K562 (cell line): ENCODE measurements at regions of chr11 and their contacts with region 1.

Region 1: GRCh38 chr11:75204685-75205563 is 35.6 kb upstream of the TPBGL start:
- DNase-seq: peak; percentile 87 to 92 (median 90)
- ATAC-seq: peak; percentile 99
- H3K4me3 ChIP-seq: no peak overlapping the region
- H3K27ac ChIP-seq: no peak overlapping the region
- H3K4me1 ChIP-seq: peaks cover 6 to 10% of the 10 kb centered on the region in 2 experiments
- H3K27me3 ChIP-seq: no peaks in the 10 kb centered on the region; a peak in 1 of 5 replicates
- CTCF ChIP-seq: peak; percentile 94 to 96 (median 94)
- EP300 ChIP-seq: no peak
- POLR2A ChIP-seq: no peak
- RAD21 ChIP-seq: peak; percentile 92 to 94

Region 2: DNA sequence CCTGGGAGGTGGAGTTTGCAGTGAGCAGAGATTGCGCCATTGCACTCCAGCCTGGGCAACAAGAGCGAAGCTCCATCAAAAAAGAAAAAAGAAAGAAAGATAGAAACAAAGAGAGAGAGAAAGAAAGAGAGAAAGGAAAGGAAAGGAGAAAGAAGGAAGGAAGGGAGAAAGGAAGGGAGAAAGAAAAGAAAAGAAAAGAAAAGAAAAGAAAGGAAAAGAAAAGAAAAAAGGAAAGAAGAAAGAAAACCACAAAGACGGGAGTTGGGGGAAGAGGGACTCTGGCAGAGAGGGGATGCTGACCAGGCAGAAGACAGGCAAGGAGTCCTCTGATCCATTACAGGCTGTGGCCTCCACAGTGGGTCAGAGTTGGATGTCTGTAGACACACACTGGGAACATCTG is 72.8 kb before region 1 on chr11:
- CTCF ChIA-PET with region 1: no interaction called
- POLR2A ChIA-PET with region 1: no interaction called
- in situ Hi-C with region 1: no loop called
- intact Hi-C with region 1: no loop called
- DNase-seq: no peak
- ATAC-seq: no peak
- H3K4me3 ChIP-seq: no peak overlapping the region
- H3K27ac ChIP-seq: no peak overlapping the region
- H3K4me1 ChIP-seq: no peaks in the 10 kb centered on the region
- H3K27me3 ChIP-seq: no peaks in the 10 kb centered on the region
- CTCF ChIP-seq: no peak
- EP300 ChIP-seq: no peak
- POLR2A ChIP-seq: no peak
- RAD21 ChIP-seq: no peak

Region 3: GRCh38 chr11:75142714-75143419 is 62.1 kb before region 1 on chr11:
- CTCF ChIA-PET with region 1: interaction called, 29 read pairs
- POLR2A ChIA-PET with region 1: no interaction called
- in situ Hi-C with region 1: loop called (anchors 10 kb)
- intact Hi-C with region 1: loop called (anchors 1 kb)
- DNase-seq: peak; percentile 84 to 91 (median 88)
- ATAC-seq: peak; percentile 86
- H3K4me3 ChIP-seq: no peak overlapping the region
- H3K27ac ChIP-seq: peak overlapping the region; percentile 33; the same call in 1 of the 3 replicates
- H3K4me1 ChIP-seq: peaks cover 22 to 32% of the 10 kb centered on the region in 2 experiments
- H3K27me3 ChIP-seq: no peaks in the 10 kb centered on the region
- CTCF ChIP-seq: 0 out of 6 replicates have a peak, but pooled peaks of 1 of the 3 experiments have one; percentile 2
- EP300 ChIP-seq: 0 out of 2 replicates have a peak, but pooled peaks have one; percentile 23
- POLR2A ChIP-seq: no peak
- RAD21 ChIP-seq: no peak

Region 4: DNA sequence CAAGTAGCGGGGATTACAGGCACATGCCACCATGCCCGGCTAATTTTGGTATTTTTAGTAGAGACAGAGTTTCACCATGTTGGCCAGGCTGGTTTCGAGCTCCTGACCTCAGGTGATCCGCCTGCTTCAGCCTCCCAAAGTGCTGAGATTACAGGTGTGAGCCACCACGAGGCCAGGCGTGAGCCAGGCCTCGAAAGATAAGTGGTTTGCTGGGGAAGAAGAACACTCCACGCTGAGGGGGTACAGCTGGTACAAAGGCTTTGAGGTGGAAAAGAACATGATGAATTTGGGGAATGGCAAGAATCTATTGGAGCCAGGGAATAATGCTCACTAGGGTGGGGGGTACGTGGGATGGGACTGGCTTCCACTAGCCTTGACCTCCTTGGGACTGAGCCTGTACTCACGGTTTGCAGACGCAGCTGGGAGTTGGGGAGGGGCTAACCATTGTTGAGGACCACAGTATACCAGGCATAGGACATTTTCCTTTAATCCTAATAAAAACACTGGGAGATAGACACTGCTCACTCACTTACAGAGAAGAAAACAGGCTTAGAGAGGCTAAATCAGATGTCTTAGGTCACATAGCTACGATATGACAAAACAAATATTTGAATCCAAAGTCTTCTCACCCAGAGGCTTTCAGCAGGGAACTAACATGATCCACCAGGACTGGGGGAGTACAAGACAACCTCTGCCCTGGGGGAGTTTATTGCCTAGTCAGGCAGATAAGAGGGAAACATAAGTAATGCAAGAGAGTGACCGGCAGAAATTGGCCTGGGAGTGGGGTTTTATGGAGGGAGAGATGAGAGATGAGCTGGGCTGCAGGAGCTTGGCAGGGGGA is 49.1 kb before region 1 on chr11:
- CTCF ChIA-PET with region 1: no interaction called
- POLR2A ChIA-PET with region 1: no interaction called
- in situ Hi-C with region 1: no loop called
- intact Hi-C with region 1: no loop called
- DNase-seq: peak; percentile 28 to 54 (median 42)
- ATAC-seq: peak; percentile 76
- H3K4me3 ChIP-seq: no peak overlapping the region
- H3K27ac ChIP-seq: no peak overlapping the region
- H3K4me1 ChIP-seq: peaks cover 8% of the 10 kb centered on the region in 2 experiments
- H3K27me3 ChIP-seq: no peaks in the 10 kb centered on the region
- CTCF ChIP-seq: no peak
- EP300 ChIP-seq: no peak
- POLR2A ChIP-seq: no peak
- RAD21 ChIP-seq: no peak

Region 5: GRCh38 chr11:75301601-75302345 is 96.8 kb after region 1 on chr11:
- CTCF ChIA-PET with region 1: no interaction called
- POLR2A ChIA-PET with region 1: no interaction called
- in situ Hi-C with region 1: no loop called
- intact Hi-C with region 1: no loop called
- DNase-seq: no peak
- ATAC-seq: peak; percentile 32
- H3K4me3 ChIP-seq: no peak overlapping the region
- H3K27ac ChIP-seq: no peak overlapping the region
- H3K4me1 ChIP-seq: 0 out of 5 replicates have a peak, but pooled peaks cover 0 to 3% of the 10 kb centered on the region in 2 experiments
- H3K27me3 ChIP-seq: no peaks in the 10 kb centered on the region
- CTCF ChIP-seq: no peak
- EP300 ChIP-seq: no peak
- POLR2A ChIP-seq: no peak
- RAD21 ChIP-seq: no peak

Region 6: GRCh38 chr11:75966546-75967287 is 761.8 kb after region 1 on chr11:
- CTCF ChIA-PET with region 1: no interaction called
- POLR2A ChIA-PET with region 1: no interaction called
- in situ Hi-C with region 1: no loop called
- intact Hi-C with region 1: no loop called
- DNase-seq: no peak
- ATAC-seq: no peak
- H3K4me3 ChIP-seq: no peak overlapping the region
- H3K27ac ChIP-seq: no peak overlapping the region
- H3K4me1 ChIP-seq: no peaks in the 10 kb centered on the region
- H3K27me3 ChIP-seq: no peaks in the 10 kb centered on the region
- CTCF ChIP-seq: no peak
- EP300 ChIP-seq: no peak
- POLR2A ChIP-seq: no peak
- RAD21 ChIP-seq: no peak